Stomach (tissue), 19 donors: ENCODE measurements at regions of chr2 and their contacts with region 1.

Region 1: DNA sequence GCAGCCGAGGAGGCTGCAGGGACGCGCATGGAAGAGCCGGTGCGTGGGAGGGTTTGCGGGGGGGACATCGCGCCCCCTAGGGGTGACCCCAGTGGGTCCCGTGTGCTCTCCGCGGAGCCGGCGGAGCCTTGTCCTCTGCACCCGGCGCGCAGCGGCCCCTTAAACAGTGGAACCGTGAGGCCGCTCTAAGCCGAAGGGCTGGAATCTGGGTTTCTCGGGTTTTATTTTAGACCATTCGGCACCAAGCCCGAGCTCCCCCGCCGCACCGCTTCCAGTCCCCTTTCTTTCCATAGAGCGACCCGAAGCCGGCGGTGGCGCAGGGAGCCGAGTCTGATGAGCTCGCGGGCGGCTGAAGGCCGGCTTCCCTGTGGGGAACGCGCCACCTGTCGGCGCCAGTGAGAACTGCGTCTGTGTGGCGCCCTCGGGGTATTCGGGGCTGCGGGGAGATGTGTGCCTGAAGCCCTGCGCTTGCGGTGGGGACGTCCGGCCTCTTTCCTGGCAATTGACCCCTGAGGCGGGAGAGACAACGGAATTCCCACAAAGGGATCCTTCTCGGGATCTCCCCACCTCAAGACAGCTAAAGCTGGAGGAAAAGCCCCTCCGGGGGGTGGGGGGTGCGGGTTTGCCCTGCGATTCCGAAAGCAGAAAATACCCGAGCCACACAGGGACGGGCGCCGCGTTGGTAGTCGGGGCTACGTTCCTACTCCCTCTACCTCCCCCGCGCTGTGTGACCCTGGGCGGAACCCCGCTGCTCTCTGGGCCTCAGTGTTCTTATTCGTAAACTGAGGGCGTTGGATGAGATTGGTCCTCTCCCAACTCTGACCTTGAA is 8.2 kb upstream of the EN1 start:
- DNase-seq: peak; percentile 82 to 93
- H3K4me3 ChIP-seq: peak overlapping the region; percentile 1 to 46 (median 20)
- H3K27ac ChIP-seq: no peak overlapping the region
- H3K4me1 ChIP-seq: peaks cover 21 to 69% (median 40%) of the 10 kb centered on the region in 4 donors
- H3K27me3 ChIP-seq: peaks cover 73 to 100% (median 95%) of the 10 kb centered on the region in 3 donors
- CTCF ChIP-seq: peak in 5 of 7 experiments; percentile 89 to 97 (median 96)
- EP300 ChIP-seq: no peak
- POLR2A ChIP-seq: no peak

Region 2: GRCh38 chr2:118032169-118033013 is 823.3 kb before region 1 on chr2:
- intact Hi-C with region 1: loop called (anchors 5 kb)
- DNase-seq: peak; percentile 51 to 66
- H3K4me3 ChIP-seq: no peak overlapping the region
- H3K27ac ChIP-seq: no peak overlapping the region
- H3K4me1 ChIP-seq: no peaks in the 10 kb centered on the region
- H3K27me3 ChIP-seq: peaks cover 0 to 25% (median 4%) of the 10 kb centered on the region in 3 donors
- CTCF ChIP-seq: peak in 5 of 7 experiments; percentile 45 to 81 (median 71)
- EP300 ChIP-seq: no peak
- POLR2A ChIP-seq: no peak

Region 3: GRCh38 chr2:118221666-118222594 is 633.7 kb before region 1 on chr2:
- intact Hi-C with region 1: loop called (anchors 5 kb)
- DNase-seq: peak; percentile 34 to 91
- H3K4me3 ChIP-seq: no peak overlapping the region
- H3K27ac ChIP-seq: no peak overlapping the region
- H3K4me1 ChIP-seq: peaks cover 10 to 22% (median 15%) of the 10 kb centered on the region in 4 donors
- H3K27me3 ChIP-seq: peaks cover 12 to 93% (median 64%) of the 10 kb centered on the region in 3 donors
- CTCF ChIP-seq: peak in 5 of 7 experiments; percentile 11 to 74 (median 46)
- EP300 ChIP-seq: no peak
- POLR2A ChIP-seq: no peak

Region 4: DNA sequence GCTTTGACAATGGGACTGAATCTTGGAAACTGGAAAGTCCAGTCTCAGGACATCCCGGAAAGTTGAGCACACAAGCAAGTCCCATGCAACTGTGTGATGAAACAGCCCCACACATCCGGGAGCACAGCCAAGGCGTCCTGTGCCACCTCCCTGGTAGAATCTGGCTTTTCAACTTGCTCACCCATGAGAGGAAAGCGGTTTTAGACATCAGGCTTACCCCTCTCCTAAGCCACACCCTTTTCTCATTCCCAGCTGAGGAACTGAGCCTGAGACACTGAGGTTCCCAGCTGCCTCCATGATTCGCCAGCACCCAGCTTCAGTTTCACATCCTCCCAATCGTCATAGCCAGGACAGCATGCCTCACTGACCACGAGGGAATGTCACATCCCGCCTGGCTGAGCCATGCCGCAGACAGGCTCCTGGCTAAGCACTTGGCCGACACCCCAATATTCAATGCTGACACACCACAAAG is 428.2 kb after region 1 on chr2:
- intact Hi-C with region 1: no loop called
- DNase-seq: peak in 1 of 2 donors; percentile 77
- H3K4me3 ChIP-seq: no peak overlapping the region
- H3K27ac ChIP-seq: peak overlapping the region in 1 of 5 donors; percentile 60
- H3K4me1 ChIP-seq: peaks cover 0 to 22% (median 8%) of the 10 kb centered on the region in 4 donors
- H3K27me3 ChIP-seq: no peaks in the 10 kb centered on the region
- CTCF ChIP-seq: no peak
- EP300 ChIP-seq: no peak
- POLR2A ChIP-seq: no peak